Left cardiac atrium (tissue), 4 donors: ENCODE measurements at regions of chr11 and their contacts with region 1.

Region 1: DNA sequence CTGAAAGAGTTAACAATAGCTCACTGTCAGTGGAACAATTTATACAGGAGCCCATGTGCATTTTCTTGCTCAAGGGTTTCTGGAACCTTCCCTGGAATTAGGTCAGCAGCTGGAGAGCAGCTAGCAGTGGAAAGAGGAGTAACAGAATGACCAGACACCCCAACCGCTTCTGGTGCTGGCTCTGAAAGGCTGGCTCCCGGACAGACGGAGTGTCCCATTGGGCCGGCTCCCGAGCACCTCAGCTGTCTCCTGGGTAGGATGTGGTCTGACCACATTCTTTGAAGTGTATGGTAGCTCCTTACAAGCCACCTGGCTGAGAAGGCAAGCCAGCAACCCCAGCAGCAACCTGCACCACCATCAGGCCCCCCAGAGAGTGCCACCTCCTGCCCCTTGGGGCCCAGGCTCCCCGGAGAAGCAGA is 44.7 kb downstream of the ABTB2 start:
- DNase-seq: no peak
- ATAC-seq: no peak

Region 2: GRCh38 chr11:34266090-34266912 is 46.8 kb before region 1 on chr11:
- intact Hi-C with region 1: loop called in 1 of 2 experiments (anchors 10 kb)
- DNase-seq: peak; percentile 58
- ATAC-seq: peak; percentile 54 to 79

Region 3: GRCh38 chr11:34344768-34345539 is 31.8 kb after region 1 on chr11:
- intact Hi-C with region 1: loop called in 1 of 2 experiments (anchors 5 kb)
- DNase-seq: peak; percentile 54
- ATAC-seq: peak; percentile 12 to 20

Region 4: DNA sequence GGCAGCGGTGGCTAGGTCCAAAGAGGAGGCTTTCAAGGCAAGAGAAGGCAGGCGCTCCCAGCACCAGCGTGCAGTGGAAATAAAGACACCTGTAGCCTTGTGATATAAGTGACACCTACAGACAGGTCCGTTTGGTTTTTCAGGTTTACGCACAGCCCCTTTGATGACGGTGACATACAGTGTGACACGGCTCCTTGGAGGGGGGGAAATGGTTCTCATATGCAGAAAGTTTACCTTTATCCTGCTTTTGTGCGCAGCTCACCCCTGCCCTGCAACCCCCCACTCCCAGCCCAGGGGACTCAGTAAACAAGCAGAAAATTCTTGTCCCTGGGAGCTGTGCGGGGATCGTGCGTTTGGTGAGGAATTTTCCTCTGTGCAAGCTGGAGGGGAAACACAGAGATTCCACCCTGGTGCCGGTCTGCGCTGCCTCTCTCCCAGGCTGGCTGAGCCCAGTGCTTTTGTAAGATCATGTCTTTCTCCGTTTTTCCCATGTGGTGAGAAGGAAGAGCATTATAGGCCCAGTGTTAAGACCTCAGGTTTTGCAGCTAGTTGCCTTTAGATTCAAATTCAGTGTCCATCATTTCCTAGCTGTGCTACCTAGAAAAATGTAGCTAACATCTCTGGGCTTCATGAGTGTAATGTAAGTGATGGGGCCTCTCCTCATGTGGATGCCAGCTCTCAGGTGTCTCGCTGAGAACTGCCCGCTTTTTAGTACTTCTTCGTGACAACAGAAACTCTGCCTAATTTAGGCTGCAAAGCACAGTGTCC is 200.8 kb after region 1 on chr11 and contains the start of gene ELF5:
- intact Hi-C with region 1: no loop called
- DNase-seq: no peak
- ATAC-seq: no peak
- total RNA-seq, gene ELF5: not detected